Heart left ventricle (tissue), 16 donors: ENCODE measurements at regions of chr5 and their contacts with region 1.

Region 1: GRCh38 chr5:172006321-172007174 is at the start of gene FBXW11:
- DNase-seq: peak; percentile 95 to 98 (median 98)
- ATAC-seq: peak; percentile 94 to 96 (median 95)
- H3K4me3 ChIP-seq: peak within 1 kb of the TSS; percentile 74 to 96 (median 87)
- H3K27ac ChIP-seq: peak within 1 kb of the TSS; percentile 92 to 99 (median 96)
- H3K4me1 ChIP-seq: peaks cover 4 to 64% (median 47%) of the 10 kb centered on the region in 12 donors
- H3K27me3 ChIP-seq: no peaks in the 10 kb centered on the region
- CTCF ChIP-seq: no peak
- POLR2A ChIP-seq: peak in 1 of 2 donors; percentile 75
- total RNA-seq, gene FBXW11: 63.2 to 110 (median 85.5) TPM

Region 2: DNA sequence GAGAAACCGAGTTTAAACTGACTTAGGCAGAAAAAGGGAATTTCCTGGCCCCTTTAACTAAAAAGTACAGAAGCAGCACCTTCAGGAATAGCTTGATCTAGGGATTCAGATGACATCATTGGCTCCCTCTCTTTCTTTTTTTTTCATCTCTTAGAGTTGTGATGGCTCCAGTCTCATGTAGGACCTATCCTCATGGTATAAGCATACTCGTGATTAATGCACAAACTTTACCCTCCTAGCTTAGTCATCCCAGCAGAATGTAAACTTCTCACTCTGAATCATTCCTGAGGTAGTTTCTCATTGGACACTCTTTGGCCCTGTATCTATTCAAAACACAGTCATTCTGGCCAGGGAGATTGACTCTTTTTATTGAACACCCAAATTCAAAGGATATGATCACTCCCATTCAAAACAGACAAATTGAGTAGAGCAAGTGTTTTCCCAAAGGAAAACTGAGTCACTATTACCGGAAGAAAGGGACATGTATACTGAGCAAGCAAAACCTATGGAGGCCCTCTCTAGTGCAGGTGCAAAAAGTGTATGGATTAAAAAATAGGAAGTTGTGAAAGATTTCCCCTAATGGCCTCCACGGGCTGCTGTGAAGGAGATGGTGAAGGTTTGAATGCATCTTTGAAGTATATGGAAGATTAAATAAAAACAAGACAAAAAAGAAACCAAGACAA is 248.6 kb before region 1 on chr5:
- intact Hi-C with region 1: no loop called
- DNase-seq: no peak
- ATAC-seq: no peak
- H3K4me3 ChIP-seq: no peak overlapping the region
- H3K27ac ChIP-seq: no peak overlapping the region
- H3K4me1 ChIP-seq: peaks cover 0 to 10% (median 0%) of the 10 kb centered on the region in 12 donors
- H3K27me3 ChIP-seq: no peaks in the 10 kb centered on the region
- CTCF ChIP-seq: no peak
- POLR2A ChIP-seq: no peak

Region 3: GRCh38 chr5:171907725-171908343 is 98.7 kb before region 1 on chr5:
- intact Hi-C with region 1: loop called (anchors 1 to 10 kb)
- DNase-seq: peak in 3 of 5 donors; percentile 30 to 49 (median 40)
- ATAC-seq: peak; percentile 49 to 85 (median 79)
- H3K4me3 ChIP-seq: no peak overlapping the region
- H3K27ac ChIP-seq: no peak overlapping the region
- H3K4me1 ChIP-seq: peaks cover 0 to 44% (median 27%) of the 10 kb centered on the region in 12 donors
- H3K27me3 ChIP-seq: no peaks in the 10 kb centered on the region
- CTCF ChIP-seq: peak; percentile 68 to 87 (median 78)
- POLR2A ChIP-seq: no peak

Region 4: GRCh38 chr5:171957591-171958251 is 48.8 kb before region 1 on chr5:
- intact Hi-C with region 1: loop called in 1 of 10 experiments (anchors 10 kb)
- DNase-seq: no peak
- ATAC-seq: peak in 3 of 4 donors; percentile 44 to 61 (median 51)
- H3K4me3 ChIP-seq: no peak overlapping the region
- H3K27ac ChIP-seq: peak overlapping the region in 4 of 12 donors; percentile 3 to 58 (median 18)
- H3K4me1 ChIP-seq: peaks cover 7 to 93% (median 66%) of the 10 kb centered on the region in 12 donors
- H3K27me3 ChIP-seq: no peaks in the 10 kb centered on the region
- CTCF ChIP-seq: no peak
- POLR2A ChIP-seq: no peak

Region 5: GRCh38 chr5:172044631-172045314 is 38.2 kb after region 1 on chr5:
- intact Hi-C with region 1: loop called in 1 of 10 experiments (anchors 5 kb)
- DNase-seq: no peak
- ATAC-seq: no peak
- H3K4me3 ChIP-seq: no peak overlapping the region
- H3K27ac ChIP-seq: no peak overlapping the region
- H3K4me1 ChIP-seq: peaks cover 0 to 16% (median 5%) of the 10 kb centered on the region in 12 donors
- H3K27me3 ChIP-seq: no peaks in the 10 kb centered on the region
- CTCF ChIP-seq: no peak
- POLR2A ChIP-seq: no peak

Region 6: GRCh38 chr5:172052450-172053236 is 46.1 kb after region 1 on chr5:
- intact Hi-C with region 1: loop called in 3 of 10 experiments (anchors 5 kb)
- DNase-seq: peak; percentile 74 to 88 (median 79)
- ATAC-seq: peak; percentile 94 to 98 (median 96)
- H3K4me3 ChIP-seq: no peak overlapping the region
- H3K27ac ChIP-seq: peak overlapping the region in 11 of 12 donors; percentile 6 to 79 (median 61)
- H3K4me1 ChIP-seq: peaks cover 0 to 25% (median 15%) of the 10 kb centered on the region in 12 donors
- H3K27me3 ChIP-seq: no peaks in the 10 kb centered on the region
- CTCF ChIP-seq: peak in 7 of 12 donors; percentile 13 to 58 (median 36)
- POLR2A ChIP-seq: no peak

Region 7: GRCh38 chr5:172059661-172060100 is 53.1 kb after region 1 on chr5:
- intact Hi-C with region 1: loop called in 2 of 10 experiments (anchors 5 kb)
- DNase-seq: no peak
- ATAC-seq: peak in 2 of 4 donors; percentile 18 to 38
- H3K4me3 ChIP-seq: no peak overlapping the region
- H3K27ac ChIP-seq: no peak overlapping the region
- H3K4me1 ChIP-seq: no peaks in the 10 kb centered on the region
- H3K27me3 ChIP-seq: no peaks in the 10 kb centered on the region
- CTCF ChIP-seq: peak; percentile 44 to 66 (median 57)
- POLR2A ChIP-seq: no peak